ENCODE measurements at regions of chr7 and their contacts with region 1.

Region 1: DNA sequence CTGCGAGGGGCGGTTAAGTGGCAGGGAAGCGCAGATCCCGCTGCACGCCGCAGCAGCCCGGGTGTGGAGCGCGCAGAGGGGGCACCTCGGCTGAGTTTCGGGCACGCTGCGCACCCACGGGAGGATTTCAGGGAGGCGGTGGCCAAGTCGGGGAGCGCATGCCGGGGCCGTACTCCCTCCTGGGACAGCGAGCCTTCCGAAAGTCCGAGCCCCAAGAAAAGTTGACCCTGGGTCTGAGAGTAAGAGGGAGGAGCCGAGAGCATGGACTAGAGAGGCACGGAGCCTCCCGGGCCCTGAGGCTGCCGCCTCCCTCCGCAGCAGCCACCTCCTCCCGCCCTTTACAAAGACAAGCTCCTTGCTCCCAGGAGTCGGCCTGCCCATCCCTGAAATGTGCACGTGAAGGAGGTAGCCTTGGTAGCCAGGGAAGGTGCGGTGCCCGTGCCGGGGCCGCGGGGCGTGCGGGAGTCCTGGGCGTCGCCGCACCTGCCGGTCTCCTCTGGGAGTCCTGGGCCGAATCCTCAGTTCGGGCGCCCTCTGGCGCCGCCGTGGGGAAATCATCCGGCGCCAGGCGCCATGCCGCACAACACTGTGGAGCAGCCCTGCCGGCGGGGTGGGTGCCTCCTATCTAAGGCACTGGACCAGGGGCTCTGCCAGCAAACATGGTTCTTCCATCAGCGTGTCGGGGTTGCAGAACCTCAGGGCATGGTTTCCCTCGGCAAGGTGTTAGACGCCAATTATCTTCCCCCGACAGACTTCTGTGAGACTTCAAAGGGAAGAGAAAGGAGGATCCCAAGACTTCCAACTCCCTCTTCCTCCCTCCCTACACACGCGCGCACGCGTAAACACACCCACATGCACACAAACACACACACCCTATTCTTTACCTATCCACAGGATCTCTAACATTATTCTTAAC is 104.0 kb downstream of the TRIL start:
- DNase-seq: peak; percentile 79 to 83 (median 80)
- ATAC-seq: peak; percentile 90
- H3K4me3 ChIP-seq: peak overlapping the region in 1 of 2 donors; percentile 15
- H3K27ac ChIP-seq: peak overlapping the region in 3 of 4 donors; percentile 3 to 33 (median 31)
- H3K4me1 ChIP-seq: peaks cover 22% of the 10 kb centered on the region
- H3K27me3 ChIP-seq: peaks cover 0 to 3% of the 10 kb centered on the region in 2 donors
- CTCF ChIP-seq: peak; percentile 81 to 94 (median 89)
- POLR2A ChIP-seq: peak in 2 of 3 donors; percentile 22 to 37

Region 2: GRCh38 chr7:28144266-28144665 is 709.8 kb before region 1 on chr7:
- intact Hi-C with region 1: no loop called
- DNase-seq: no peak
- ATAC-seq: no peak
- H3K4me3 ChIP-seq: no peak overlapping the region
- H3K27ac ChIP-seq: peak overlapping the region in 1 of 4 donors; percentile 15
- H3K4me1 ChIP-seq: peaks cover 13% of the 10 kb centered on the region
- H3K27me3 ChIP-seq: no peaks in the 10 kb centered on the region
- CTCF ChIP-seq: no peak
- POLR2A ChIP-seq: no peak

Region 3: DNA sequence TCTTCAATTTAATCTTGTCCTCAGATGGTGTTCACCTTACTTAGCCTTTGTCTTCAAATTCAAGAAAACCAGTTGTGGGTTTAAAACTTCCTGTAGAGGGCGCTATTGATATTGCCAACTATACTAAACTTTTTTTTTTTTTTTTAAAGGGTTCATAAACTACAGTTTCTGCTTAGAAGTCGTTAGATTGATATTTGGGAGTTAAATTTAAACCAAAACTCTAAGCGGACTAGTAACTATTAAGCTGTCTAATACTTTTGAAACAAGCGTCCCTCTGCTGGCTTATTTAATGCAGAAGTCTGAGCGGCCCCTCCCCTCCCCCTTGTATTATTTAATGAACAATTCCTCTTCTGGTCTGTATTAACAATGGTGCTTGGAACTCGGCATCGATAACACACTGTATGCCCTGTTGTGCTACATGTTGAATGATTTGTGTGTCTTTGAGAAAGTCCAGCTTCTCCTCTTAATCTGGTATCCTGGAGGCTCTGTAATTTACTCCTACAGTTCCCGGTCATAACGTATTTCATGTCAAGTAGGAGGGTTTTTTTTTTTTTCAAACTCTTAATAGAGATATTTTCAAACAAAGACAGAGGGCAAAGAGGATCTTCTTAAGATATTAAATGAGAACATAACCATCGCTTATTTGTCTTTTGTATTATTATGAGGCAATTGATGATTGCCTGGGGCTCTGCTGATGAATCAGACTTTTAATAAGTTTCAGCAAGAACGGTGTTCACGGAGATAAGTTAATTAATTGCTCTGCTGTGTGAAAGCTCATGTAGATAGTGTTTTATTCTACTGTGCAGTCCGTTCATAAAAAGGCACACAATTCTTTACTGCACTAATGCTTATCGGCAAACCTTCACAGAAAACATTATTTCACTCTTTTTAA is 464.3 kb before region 1 on chr7:
- intact Hi-C with region 1: loop called (anchors 5 kb)
- DNase-seq: peak in 1 of 4 donors; percentile 33
- ATAC-seq: peak; percentile 53
- H3K4me3 ChIP-seq: no peak overlapping the region
- H3K27ac ChIP-seq: peak overlapping the region in 1 of 4 donors; percentile 40
- H3K4me1 ChIP-seq: no peaks in the 10 kb centered on the region
- H3K27me3 ChIP-seq: no peaks in the 10 kb centered on the region
- CTCF ChIP-seq: peak; percentile 60 to 89 (median 75)
- POLR2A ChIP-seq: no peak

Region 4: GRCh38 chr7:28708033-28708951 is 145.8 kb before region 1 on chr7:
- intact Hi-C with region 1: no loop called
- DNase-seq: no peak
- ATAC-seq: peak; percentile 59
- H3K4me3 ChIP-seq: no peak overlapping the region
- H3K27ac ChIP-seq: no peak overlapping the region
- H3K4me1 ChIP-seq: peaks cover 4% of the 10 kb centered on the region
- H3K27me3 ChIP-seq: no peaks in the 10 kb centered on the region
- CTCF ChIP-seq: no peak
- POLR2A ChIP-seq: no peak

Measured in body of pancreas (tissue), 4 donors.